Pancreas (tissue), 10 donors: ENCODE measurements at regions of chr6 and their contacts with region 1.

Region 1: DNA sequence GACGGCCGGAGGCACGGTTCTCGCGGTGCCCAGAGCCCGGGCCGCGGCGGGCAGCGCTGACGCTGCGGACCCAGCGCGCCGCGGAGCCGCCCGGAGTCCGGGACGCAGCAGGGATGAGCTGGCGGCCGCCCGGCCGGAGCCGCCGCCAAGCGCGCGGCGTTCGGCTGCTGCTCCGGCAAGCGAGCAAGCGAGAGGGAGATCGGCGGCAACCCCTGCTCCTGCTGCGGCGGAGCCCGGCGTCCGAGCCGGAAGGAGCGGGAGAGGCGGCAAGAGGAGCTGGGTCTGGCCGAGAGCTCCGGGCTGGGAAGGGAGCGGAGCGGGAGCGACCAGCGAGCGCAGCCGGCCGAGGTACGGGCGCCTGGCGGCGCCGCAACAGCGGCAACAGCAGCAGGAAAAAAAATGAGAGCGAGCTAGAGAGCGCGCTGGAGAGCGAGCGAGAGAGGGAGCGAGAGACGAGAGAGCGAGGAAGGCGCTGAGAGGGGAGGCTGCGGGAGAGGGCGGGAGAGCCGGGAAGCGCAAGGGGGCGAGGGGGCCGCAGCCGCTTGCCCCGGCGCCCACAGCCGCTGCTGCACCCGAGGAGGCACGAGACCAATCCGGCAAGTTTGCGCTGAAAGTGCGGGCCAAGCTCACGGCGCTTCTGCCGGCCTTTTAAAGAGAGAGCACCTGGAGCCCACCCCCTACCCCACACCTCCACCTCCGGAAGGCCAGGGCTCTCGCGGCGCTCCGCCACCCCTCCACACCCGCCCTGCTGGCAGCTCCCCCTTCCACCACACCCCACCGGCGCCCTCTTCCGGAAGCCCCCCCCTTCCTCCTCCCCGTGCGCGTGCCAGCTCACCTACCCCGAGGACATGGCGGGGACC is 496 bp downstream of the GRM4 start:
- DNase-seq: peak in 5 of 6 donors; percentile 13 to 70 (median 36)
- ATAC-seq: peak in 3 of 4 donors; percentile 54 to 74 (median 63)
- H3K4me3 ChIP-seq: peak overlapping the region; percentile 10 to 46 (median 22)
- H3K27ac ChIP-seq: no peak overlapping the region
- H3K4me1 ChIP-seq: peaks cover 10 to 16% (median 15%) of the 10 kb centered on the region in 3 donors
- H3K27me3 ChIP-seq: peaks cover 0 to 36% (median 5%) of the 10 kb centered on the region in 4 donors
- CTCF ChIP-seq: no peak

Region 2: GRCh38 chr6:34062815-34063214 is 82.6 kb before region 1 on chr6:
- intact Hi-C with region 1: loop called in 1 of 3 experiments (anchors 5 kb)
- DNase-seq: no peak
- ATAC-seq: no peak
- H3K4me3 ChIP-seq: no peak overlapping the region
- H3K27ac ChIP-seq: no peak overlapping the region
- H3K4me1 ChIP-seq: no peaks in the 10 kb centered on the region
- H3K27me3 ChIP-seq: peaks cover 0 to 6% (median 0%) of the 10 kb centered on the region in 4 donors
- CTCF ChIP-seq: no peak

Region 3: GRCh38 chr6:34223956-34224940 is 78.9 kb after region 1 on chr6:
- intact Hi-C with region 1: no loop called
- DNase-seq: peak; percentile 87 to 98 (median 95)
- ATAC-seq: peak; percentile 96 to 100 (median 99)
- H3K4me3 ChIP-seq: peak overlapping the region; percentile 44 to 55 (median 48)
- H3K27ac ChIP-seq: peak overlapping the region; percentile 84 to 94 (median 88)
- H3K4me1 ChIP-seq: peaks cover 0 to 5% (median 0%) of the 10 kb centered on the region in 3 donors
- H3K27me3 ChIP-seq: no peaks in the 10 kb centered on the region
- CTCF ChIP-seq: no peak